ENCODE measurements at regions of chr12 and their contacts with region 1.

Region 1: GRCh38 chr12:108193917-108194316 is 64.8 kb downstream of the WSCD2 start:
- DNase-seq: peak in 4 of 10 donors; percentile 21 to 85 (median 26)

Region 2: DNA sequence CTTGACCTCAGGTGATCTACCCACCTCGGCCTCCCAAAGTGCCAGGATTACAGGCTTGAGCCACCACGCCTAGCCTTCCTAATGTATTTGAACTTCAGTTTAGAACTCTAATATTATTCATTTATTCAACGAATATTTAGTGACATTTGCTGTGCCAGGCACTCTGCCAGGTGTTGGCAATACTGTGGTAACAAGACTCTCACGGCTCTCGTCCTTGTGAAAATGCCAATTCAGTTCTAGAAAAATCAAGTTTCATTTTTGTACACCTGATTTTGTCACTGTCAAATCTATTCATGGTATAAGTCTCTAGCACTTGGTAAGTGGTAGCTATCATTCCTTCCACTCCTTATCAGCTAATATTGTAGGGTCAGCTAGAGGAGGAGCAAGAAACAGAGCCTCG is 514.6 kb before region 1 on chr12:
- intact Hi-C with region 1: loop called (anchors 5 kb)
- DNase-seq: no peak

Region 3: GRCh38 chr12:107917912-107918800 is 275.8 kb before region 1 on chr12:
- intact Hi-C with region 1: loop called (anchors 5 kb)
- DNase-seq: peak in 3 of 10 donors; percentile 14 to 29 (median 18)

Region 4: DNA sequence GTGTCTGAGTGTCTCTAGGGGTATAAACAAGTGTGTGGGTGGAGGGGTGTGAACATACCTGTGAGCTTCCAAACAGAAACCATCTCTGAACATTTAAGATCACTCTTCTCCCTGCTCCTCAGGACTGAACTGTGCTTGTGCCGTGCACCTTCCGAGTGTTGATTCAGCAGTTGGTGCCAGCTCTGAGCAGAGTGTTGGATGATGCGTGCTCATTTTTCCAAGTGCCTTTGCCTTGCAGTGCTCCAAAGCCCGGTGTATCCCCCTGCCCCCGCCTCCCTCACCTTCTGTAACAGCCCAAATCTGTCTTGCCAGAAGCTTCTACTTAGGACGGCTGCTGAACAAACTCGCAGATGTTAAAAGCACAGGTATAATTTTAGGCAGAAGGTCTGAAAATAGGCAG is 60.4 kb before region 1 on chr12:
- intact Hi-C with region 1: loop called (anchors 10 kb)
- DNase-seq: peak in 4 of 10 donors; percentile 32 to 88 (median 54)

Region 5: GRCh38 chr12:108337235-108338223 is 143.6 kb after region 1 on chr12:
- intact Hi-C with region 1: no loop called
- DNase-seq: no peak

Measured in posterior cingulate gyrus (tissue), 11 donors.